ENCODE measurements at regions of chr12 and their contacts with region 1.

Region 1: GRCh38 chr12:70719672-70720420 is 82.6 kb upstream of the PTPRB start:
- DNase-seq: no peak
- H3K4me3 ChIP-seq: peak overlapping the region in 1 of 2 donors; percentile 11
- H3K27ac ChIP-seq: no peak overlapping the region
- H3K4me1 ChIP-seq: no peaks in the 10 kb centered on the region
- H3K27me3 ChIP-seq: no peaks in the 10 kb centered on the region
- CTCF ChIP-seq: peak; percentile 49 to 75 (median 69)
- POLR2A ChIP-seq: no peak

Region 2: GRCh38 chr12:69932676-69933552 is 786.9 kb before region 1 on chr12:
- intact Hi-C with region 1: no loop called
- DNase-seq: no peak
- H3K4me3 ChIP-seq: no peak overlapping the region
- H3K27ac ChIP-seq: no peak overlapping the region
- H3K4me1 ChIP-seq: no peaks in the 10 kb centered on the region
- H3K27me3 ChIP-seq: no peaks in the 10 kb centered on the region
- CTCF ChIP-seq: no peak
- POLR2A ChIP-seq: no peak

Region 3: GRCh38 chr12:70590051-70590450 is 129.8 kb before region 1 on chr12:
- intact Hi-C with region 1: loop called (anchors 10 kb)
- DNase-seq: no peak
- H3K4me3 ChIP-seq: no peak overlapping the region
- H3K27ac ChIP-seq: no peak overlapping the region
- H3K4me1 ChIP-seq: no peaks in the 10 kb centered on the region
- H3K27me3 ChIP-seq: no peaks in the 10 kb centered on the region
- CTCF ChIP-seq: peak; percentile 39 to 65 (median 49)
- POLR2A ChIP-seq: no peak